Left cardiac atrium (tissue), 4 donors: ENCODE measurements at regions of chr7 and their contacts with region 1.

Region 1: DNA sequence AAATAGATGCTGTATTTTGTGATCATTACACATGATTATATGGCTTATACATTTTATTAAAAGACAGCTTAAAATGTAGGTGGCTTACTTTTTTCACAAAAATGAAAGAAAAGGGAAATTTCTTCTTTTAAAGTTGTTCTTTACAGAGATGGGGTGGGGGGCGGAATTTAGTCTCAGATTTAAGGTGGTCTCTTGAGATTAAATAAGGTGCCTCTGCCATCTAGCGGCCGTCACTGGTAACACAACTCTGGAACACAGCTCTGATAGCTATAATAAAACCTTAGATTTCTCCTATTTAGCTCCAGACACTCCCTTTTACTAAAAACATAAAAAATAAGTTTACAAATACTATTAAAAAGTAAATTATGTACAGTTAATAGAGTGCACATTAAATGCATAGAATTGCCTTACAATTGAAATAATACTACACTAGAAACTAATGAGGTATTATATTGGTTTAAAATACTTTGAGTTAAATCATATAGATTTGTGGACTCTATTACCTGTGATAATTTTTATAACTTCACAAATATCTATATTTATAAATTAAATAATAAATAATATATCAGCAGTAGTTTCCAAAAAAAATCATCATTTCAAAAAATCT is 210.9 kb downstream of the DGKB start:
- DNase-seq: peak; percentile 43
- ATAC-seq: no peak

Region 2: DNA sequence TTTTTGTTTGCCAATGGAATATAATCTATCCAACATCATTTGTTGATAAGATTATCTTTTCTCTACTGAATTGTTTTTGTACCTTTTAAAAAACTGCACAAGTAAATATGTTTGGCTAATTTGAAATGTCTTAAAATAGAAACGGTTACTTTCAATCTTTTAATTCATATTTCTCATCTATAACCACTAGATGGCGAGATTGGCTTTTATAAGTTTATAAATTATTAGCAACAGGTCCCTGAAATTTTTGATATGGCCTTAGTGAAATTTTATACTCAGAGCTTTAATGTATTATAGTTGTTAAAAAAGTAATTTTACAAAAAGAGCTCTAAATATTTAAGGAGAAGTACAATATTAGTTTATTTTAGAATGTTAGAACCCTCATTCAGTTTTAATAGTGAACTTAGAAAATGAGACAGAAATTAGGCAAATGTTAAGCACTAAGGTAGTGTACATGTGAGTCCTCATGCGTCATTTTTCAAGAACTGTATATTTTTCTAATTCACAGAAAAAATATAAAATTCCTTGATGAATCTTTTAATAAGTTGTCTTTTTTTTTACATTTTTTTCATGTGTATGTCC is 1411.8 kb before region 1 on chr7:
- intact Hi-C with region 1: loop called (anchors 2 to 5 kb)
- DNase-seq: no peak
- ATAC-seq: no peak

Region 3: DNA sequence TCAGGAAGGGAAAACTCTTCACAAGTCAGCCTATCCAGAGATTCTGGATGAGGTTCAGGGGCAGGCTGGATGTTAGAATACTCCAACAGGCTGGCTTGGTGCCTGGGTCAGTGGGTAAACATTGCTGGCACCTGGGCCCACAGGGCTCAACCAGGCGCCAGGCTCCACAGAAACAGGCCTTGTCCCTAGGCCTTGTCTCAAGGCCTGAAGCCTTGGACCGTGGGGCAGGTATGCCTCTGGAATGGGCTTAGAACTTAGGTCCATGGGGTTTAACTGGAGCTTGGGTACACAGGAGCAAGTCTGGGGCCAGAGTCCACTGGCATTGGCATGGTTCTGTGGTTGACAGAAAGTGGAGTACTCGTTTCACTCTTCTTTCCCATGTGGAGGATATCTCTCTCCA is 439.2 kb before region 1 on chr7:
- intact Hi-C with region 1: no loop called
- DNase-seq: no peak
- ATAC-seq: no peak